A673 (cell line): ENCODE measurements at regions of chr17 and their contacts with region 1.

Region 1: DNA sequence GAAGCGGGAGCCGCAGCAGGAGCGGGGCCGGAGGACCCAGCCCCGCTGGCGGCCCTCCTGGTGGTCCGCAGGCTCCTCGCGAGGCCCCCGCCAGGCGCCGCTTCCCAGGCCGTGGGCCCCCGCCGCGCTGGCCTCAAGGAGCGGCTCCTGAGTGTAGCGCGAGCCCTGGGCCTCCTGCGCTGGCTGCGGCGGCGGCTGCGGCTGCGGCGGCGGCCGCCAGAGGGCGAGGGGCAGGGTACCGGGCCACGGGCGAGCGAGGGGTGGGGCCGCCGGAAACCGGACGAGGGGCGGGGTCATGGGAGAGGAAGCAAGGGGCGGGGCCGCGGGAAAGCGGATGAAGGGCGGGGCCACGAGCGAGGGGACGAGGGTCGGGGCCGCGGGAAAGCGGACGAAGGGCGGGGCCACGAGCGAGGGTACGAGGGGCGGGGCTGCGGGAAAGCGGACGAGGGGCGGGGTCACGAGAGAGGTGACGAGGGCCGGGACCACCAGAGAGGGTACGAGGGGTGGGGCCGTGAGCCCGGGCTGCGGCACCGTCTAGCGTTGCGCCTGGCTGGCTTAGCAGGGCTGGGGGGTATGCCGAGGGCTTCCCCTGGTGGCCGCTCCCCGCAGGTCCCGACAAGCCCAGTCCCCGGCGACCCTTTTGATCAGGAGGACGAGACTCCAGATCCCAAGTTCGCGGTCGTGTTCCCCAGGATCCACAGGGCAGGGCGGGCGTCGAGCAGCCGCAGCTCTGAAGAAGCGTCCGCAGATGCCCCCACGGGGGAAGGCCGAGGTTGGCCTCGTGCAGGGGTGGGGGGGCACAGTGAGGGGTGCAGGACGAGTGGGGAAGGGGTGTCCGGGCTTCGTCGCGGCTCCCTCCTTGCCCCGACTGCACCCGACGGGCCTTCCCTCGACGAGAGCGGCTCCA is 1.7 kb downstream of the MYO15B start:
- DNase-seq: peak; percentile 94
- H3K4me3 ChIP-seq: peak overlapping the region; percentile 55
- H3K27ac ChIP-seq: peak overlapping the region; percentile 73
- H3K4me1 ChIP-seq: peaks cover 9% of the 10 kb centered on the region
- H3K27me3 ChIP-seq: no peaks in the 10 kb centered on the region
- CTCF ChIP-seq: no peak; the same call in none of the 2 replicates

Region 2: GRCh38 chr17:75430159-75430974 is 158.9 kb before region 1 on chr17:
- CTCF ChIA-PET with region 1: no interaction called
- POLR2A ChIA-PET with region 1: no interaction called
- intact Hi-C with region 1: loop called (anchors 10 kb)
- DNase-seq: no peak
- H3K4me3 ChIP-seq: no peak overlapping the region
- H3K27ac ChIP-seq: no peak overlapping the region
- H3K4me1 ChIP-seq: no peaks in the 10 kb centered on the region
- H3K27me3 ChIP-seq: no peaks in the 10 kb centered on the region
- CTCF ChIP-seq: no peak

Region 3: DNA sequence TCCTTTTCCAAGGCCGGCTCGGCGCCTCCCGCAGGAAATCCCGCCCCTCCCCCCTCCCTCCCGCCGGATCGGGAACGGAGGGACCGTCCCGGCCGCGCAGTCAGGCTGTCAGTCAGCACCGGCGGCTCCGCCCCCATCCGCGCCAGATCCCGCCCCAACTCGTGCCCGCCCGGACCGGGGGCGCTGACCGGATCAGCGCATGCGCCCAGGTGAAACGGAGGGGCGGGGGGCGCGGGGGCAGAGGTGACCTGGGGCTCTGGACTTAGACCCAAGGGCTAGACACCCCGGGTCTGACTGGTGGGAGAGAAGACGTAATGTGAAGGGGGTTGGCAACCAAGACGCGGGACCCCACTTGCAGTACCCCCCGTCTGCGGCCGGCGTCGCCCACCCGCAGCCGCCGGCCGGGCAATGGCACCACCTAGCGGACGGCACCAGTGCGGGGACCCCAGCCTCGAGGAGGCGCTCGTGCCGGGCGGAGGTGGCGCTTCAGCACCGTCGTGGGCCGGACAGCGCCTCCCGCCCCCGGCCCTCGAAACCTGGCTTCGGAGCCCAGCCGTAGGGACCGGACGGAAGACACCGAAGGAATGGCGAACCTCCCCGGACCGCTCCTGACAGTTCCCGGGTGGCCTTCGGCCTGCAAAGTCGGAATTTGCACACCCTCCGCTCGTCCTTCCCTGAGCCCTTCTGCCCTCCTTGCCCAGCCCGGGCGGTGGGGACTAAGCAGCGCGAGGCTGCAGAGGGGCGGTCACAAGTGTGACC is 73.6 kb before region 1 on chr17 and contains the start of gene CASKIN2:
- CTCF ChIA-PET with region 1: no interaction called
- POLR2A ChIA-PET with region 1: no interaction called
- intact Hi-C with region 1: loop called (anchors 5 kb)
- DNase-seq: peak; percentile 92
- H3K4me3 ChIP-seq: peak within 1 kb of the TSS; percentile 87
- H3K27ac ChIP-seq: peak within 1 kb of the TSS; percentile 80
- H3K4me1 ChIP-seq: no peaks in the 10 kb centered on the region
- H3K27me3 ChIP-seq: no peaks in the 10 kb centered on the region
- CTCF ChIP-seq: peak; percentile 98
- total RNA-seq, gene CASKIN2: 32.6 and 32.7 TPM in 2 replicates

Region 4: DNA sequence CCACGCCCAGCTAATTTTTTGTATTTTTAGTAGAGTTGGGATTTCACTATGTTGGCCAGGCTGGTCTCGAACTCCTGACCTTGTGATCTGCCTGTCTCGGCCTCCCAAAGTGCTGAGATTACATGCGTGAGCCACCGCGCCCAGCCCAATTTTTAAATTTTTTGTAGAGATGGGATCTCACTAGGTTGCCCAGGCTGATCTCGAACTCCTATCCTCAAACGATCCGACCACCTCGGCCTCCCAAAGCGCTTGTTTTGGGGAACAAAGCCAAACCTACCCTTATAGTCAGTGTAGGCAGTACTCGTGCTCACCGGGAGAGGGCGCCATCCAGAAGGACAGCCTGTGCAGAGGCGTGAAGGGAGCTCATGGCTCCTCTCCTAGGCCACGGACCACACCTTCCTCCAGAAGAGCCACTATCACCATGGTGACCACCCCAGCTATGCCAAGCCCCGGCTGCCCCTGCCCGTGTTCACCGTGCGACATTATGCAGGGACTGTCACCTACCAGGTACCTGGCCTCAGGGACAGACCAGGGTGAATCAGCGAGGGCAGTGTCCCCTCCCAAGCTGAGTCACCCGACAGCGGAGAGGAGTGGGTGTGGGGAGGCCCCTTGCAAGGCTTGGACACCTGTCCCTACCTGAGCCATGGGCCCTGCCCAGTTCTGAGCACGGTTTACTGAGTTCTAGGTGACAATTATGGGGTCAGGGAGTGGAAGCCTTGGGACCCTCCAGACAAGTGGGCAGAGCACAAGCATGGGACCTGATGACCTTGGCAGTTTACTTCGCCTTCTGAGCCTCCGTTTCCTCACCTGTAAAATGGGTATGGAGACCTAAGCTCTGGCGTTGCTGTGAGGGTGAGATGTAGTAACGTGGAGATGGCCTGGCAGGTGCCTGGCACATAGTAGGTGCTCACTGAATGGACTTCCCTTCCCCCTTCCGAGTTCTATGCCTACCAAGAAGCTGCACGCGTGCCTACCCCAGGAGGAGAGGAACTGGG is 12.1 kb after region 1 on chr17:
- CTCF ChIA-PET with region 1: interaction called, 10 read pairs
- POLR2A ChIA-PET with region 1: no interaction called
- intact Hi-C with region 1: no loop called
- DNase-seq: peak; percentile 79
- H3K4me3 ChIP-seq: no peak overlapping the region
- H3K27ac ChIP-seq: no peak overlapping the region
- H3K4me1 ChIP-seq: no peaks in the 10 kb centered on the region
- H3K27me3 ChIP-seq: no peaks in the 10 kb centered on the region
- CTCF ChIP-seq: peak; percentile 91